A549 (cell line): ENCODE measurements at regions of chr7 and their contacts with region 1.

Region 1: DNA sequence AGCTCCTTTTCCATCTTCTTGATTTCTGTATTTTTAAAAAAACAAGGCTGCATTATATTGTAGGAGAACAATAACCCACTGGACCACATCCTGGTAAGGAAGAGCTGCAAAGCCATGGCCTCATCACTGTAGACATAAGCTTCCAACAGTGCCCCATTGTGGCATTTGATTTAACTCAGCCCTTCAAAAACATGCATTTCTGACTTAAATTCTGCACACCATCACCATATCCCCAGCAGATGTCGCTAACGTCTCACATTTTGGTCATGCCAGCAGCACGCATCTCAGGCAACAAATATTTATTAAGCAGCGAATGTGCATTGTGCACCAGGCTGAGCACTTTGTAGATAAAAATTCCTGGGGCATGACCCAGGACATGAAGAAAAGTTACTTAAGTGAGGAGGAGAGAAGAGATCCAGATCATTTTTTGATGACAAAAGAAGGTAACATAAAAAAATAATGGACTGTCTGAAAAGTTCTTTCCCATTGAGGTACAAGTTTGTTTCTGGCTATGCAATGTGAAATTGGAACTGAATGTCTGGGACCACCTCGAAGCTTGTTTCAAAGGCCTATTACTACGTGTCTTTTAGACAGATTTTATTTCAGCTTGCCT is 164.6 kb upstream of the CDCA7L start:
- DNase-seq: peak; percentile 63 to 81
- ATAC-seq: peak; percentile 79 to 94
- H3K4me3 ChIP-seq: no peak overlapping the region
- H3K27ac ChIP-seq: no peak overlapping the region
- H3K4me1 ChIP-seq: no peaks in the 10 kb centered on the region
- CTCF ChIP-seq: peak; percentile 94
- EP300 ChIP-seq: no peak
- POLR2A ChIP-seq: no peak
- RAD21 ChIP-seq: peak; percentile 95 to 96

Region 2: DNA sequence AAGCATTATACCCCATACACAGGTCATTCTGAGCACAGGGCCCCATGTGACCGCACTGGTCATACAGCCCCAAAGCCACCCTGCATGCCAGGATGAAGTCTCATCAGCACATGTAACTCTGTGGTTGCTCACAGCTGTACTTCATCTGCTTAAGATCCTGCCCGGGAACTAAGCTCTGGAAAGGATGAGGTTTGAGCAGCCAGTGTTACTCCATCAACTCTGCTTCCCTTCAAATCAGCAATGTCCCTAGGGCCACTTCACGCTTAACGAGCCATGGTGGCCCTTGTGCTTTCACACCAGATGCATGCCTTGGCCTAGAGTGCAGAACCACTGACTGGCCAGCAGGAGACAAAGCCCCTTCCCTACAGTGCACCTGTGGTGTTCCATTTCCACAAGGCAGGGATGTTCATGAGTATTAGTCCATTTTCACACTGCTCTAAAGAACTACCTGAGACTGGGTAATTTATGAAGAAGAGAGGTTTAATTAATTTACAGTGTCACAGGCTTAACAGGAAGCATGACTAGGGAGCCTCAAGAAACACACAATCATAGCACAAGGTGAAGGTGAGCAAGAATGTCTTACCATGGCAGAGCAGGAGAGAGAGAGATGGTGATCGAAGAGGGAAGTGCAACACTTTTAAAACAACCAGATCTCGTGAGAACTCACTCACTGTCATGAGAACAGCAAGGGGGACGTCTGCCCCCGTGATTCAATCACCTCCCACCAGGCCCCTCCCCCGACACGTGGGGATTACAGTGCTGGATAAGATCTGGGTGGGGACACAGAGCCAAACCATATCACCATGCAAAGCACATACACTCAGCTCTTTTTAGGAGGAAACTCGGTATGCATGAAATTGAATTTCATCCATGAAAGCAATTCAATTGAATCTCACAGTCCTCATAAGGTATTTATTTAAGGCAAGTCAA is 15.7 kb before region 1 on chr7:
- CTCF ChIA-PET with region 1: interaction called, 32 read pairs
- POLR2A ChIA-PET with region 1: no interaction called
- DNase-seq: no peak
- ATAC-seq: peak in 1 of 2 experiments; percentile 61; a peak in 3 of 6 replicates
- H3K4me3 ChIP-seq: no peak overlapping the region
- H3K27ac ChIP-seq: no peak overlapping the region
- H3K4me1 ChIP-seq: no peaks in the 10 kb centered on the region
- CTCF ChIP-seq: no peak
- EP300 ChIP-seq: no peak
- POLR2A ChIP-seq: no peak
- RAD21 ChIP-seq: no peak

Region 3: DNA sequence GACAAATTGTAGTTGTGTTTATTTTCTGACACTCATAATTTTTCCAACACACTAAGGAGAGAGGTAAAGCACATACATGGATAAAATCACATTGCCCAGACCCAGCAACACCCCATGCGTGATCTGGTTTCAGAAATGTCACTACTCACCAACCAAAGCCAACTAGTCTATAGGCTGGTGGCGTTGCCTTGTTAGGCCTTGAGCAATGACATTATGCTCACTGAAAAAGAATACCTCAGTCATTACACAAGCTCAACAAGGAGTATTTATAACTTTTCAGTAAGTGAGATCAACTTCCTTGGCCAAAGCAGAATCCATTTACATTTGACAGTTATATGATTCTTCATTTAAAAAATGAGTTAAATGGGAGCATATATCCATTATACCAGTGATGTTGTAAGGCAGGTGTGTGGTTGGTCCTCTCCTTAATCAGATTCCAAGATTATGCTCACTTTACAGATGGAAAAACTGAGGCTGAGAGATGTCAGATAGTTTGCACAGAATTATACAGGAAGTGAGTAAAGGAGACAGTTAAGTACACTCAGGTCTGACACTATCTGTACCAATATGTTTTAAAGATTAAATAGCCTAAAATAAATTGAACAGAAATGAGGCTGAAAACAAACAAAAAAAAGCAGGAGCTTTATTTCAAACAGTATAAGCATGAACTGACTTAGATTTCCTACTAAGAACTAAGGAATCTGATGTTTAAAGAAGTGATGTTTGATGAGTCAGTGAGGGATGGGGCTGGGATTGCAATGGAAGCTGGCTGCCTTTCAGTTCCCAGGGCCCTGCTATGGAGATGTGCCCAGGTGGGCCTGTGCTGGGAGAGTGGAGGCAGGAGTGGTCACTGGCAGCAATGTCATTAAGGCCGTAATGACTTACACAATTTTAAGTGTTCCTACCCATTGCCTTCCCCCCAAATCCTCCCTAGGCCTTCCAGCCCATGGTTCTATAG is 128.3 kb after region 1 on chr7:
- CTCF ChIA-PET with region 1: no interaction called
- POLR2A ChIA-PET with region 1: no interaction called
- DNase-seq: no peak
- ATAC-seq: peak; percentile 31 to 47; a peak in 1 of 6 replicates
- H3K4me3 ChIP-seq: no peak overlapping the region
- H3K27ac ChIP-seq: no peak overlapping the region
- H3K4me1 ChIP-seq: no peaks in the 10 kb centered on the region
- CTCF ChIP-seq: no peak
- EP300 ChIP-seq: no peak
- POLR2A ChIP-seq: no peak
- RAD21 ChIP-seq: no peak

Region 4: DNA sequence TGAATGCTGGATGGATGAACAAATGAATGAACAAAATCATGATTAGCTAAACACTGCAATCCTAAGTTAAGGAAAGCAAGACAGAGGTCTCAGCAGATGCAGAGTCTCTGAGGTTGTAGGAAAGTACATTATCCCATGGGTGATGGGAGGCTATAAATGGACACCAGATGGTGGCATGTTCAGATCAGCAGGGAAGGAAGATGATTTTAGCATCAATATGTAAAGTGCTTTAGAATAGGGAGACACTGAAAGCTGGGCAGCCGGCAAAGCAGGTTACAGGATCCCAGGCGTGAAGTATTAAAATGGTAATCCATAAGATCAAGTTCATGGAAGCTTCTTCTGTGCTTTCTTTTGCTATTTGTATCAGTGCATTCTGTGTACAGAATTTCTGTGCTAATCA is 254.6 kb after region 1 on chr7:
- CTCF ChIA-PET with region 1: interaction called, 10 read pairs
- POLR2A ChIA-PET with region 1: no interaction called
- DNase-seq: no peak
- ATAC-seq: no peak
- H3K4me3 ChIP-seq: no peak overlapping the region
- H3K27ac ChIP-seq: no peak overlapping the region
- H3K4me1 ChIP-seq: no peaks in the 10 kb centered on the region
- CTCF ChIP-seq: no peak
- EP300 ChIP-seq: no peak
- POLR2A ChIP-seq: no peak
- RAD21 ChIP-seq: no peak

Region 5: GRCh38 chr7:22481726-22482125 is 371.4 kb after region 1 on chr7:
- CTCF ChIA-PET with region 1: interaction called, 82 read pairs
- POLR2A ChIA-PET with region 1: no interaction called
- DNase-seq: no peak
- ATAC-seq: no peak
- H3K4me3 ChIP-seq: no peak overlapping the region
- H3K27ac ChIP-seq: no peak overlapping the region
- H3K4me1 ChIP-seq: no peaks in the 10 kb centered on the region
- CTCF ChIP-seq: no peak
- EP300 ChIP-seq: no peak
- POLR2A ChIP-seq: no peak
- RAD21 ChIP-seq: no peak

Region 6: DNA sequence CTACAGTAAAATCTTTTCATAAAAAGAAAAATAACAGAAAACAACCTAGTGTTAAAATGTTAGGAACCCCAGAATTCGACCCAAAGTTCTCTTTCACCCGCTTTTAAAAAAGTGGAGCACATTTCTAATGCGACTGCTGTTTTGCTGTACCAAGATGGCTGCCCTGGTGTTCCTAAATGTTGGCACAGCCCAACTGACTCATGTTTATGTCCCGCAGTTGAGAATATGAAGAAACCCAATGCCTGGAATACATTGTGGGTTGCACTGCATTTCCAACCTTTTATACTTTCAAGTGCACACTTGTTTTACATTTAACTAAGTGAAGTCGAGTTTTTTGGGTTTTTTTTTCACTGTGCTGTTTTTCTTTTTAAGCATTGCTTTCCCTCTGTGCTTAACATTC is 388.7 kb after region 1 on chr7:
- CTCF ChIA-PET with region 1: interaction called, 30 read pairs
- POLR2A ChIA-PET with region 1: no interaction called
- DNase-seq: no peak
- ATAC-seq: no peak
- H3K4me3 ChIP-seq: no peak overlapping the region
- H3K27ac ChIP-seq: no peak overlapping the region
- H3K4me1 ChIP-seq: no peaks in the 10 kb centered on the region
- CTCF ChIP-seq: no peak
- EP300 ChIP-seq: no peak
- POLR2A ChIP-seq: no peak
- RAD21 ChIP-seq: no peak